IMR-90 (cell line): ENCODE measurements at regions of chr1 and their contacts with region 1.

Region 1: DNA sequence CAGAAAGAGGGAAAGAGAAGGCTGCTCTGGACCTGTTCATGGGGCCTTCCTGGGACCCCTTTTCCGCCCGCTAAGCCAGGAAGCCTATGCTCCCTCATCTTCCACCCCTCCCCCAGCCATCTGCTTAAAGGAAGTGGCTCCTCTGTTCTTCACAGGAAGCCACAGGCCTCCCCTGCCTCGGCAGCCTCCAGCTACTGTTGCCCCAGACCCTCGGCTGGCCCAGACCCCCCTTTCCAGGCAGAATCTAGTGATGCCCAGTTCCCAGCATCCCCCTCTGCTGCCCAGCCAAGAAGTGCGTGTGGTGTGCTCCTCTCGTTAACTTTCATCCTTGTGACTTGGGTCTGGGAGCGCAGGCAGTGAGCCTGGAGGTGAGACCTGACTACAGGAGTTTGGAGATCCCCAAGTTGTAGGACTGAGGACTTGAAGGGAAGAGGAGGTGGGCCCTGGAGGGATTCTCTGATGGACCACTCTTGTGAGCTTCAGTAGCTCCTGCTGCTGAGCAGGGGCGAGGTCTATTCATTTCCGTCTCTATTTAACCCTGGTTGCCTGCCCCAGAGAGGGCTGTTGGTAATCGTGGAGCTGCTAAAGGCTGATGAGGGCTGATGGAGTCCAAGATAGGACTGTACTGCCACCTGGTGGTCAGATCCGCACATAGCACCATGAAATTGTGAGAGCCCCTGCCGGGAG is 9.1 kb downstream of the IFI6 start:
- DNase-seq: peak; percentile 76
- ATAC-seq: peak; percentile 86
- H3K4me3 ChIP-seq: no peak overlapping the region
- H3K27ac ChIP-seq: 0 out of 2 replicates have a peak overlapping the region, but pooled peaks have one; percentile 2
- H3K4me1 ChIP-seq: peaks cover 14% of the 10 kb centered on the region
- H3K27me3 ChIP-seq: no peaks in the 10 kb centered on the region
- CTCF ChIP-seq: peak; percentile 92
- POLR2A ChIP-seq: 0 out of 2 replicates have a peak, but pooled peaks have one; percentile 32
- RAD21 ChIP-seq: peak; percentile 89

Region 2: DNA sequence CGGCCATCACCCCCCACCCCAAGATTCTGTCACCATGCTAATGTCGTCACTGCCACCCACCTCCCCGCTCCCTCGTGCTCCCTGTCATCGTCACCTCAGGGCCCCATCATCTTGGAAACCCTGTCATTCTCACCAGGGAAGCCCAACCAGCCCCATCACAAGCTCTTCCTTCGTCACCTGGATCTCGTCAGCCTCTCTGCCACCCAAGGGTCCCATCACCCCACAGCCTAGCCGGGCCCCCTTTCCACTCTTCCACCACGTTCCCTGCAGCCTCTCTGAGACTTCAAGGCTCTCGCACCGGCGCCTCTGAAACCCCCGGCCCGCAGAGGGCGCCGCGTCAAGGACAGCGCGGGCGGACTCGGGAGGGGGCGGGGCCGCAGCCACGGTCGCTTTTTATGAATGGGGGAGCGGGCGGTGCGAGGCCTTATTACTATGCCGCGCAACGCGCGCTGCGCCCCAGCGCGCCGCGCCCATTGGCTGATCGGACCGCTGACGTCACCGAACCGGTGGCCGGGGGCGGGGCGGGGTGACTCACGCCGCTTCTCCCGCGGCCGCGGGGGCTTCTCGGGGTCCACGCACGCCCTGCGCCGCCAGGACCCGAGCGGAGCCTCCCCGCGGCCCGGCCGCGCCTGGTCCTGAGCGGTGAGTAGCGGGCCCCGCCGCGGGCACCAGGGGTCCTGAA is 270.6 kb before region 1 on chr1 and contains the start of gene GPR3:
- CTCF ChIA-PET with region 1: interaction called, 3 read pairs
- POLR2A ChIA-PET with region 1: no interaction called
- dilution Hi-C with region 1: no loop called
- in situ Hi-C with region 1: no loop called
- intact Hi-C with region 1: loop called (anchors 5 kb)
- DNase-seq: peak; percentile 91
- ATAC-seq: peak; percentile 92
- H3K4me3 ChIP-seq: peak within 1 kb of the TSS; percentile 63
- H3K27ac ChIP-seq: peak within 1 kb of the TSS; percentile 52; the same call in 1 of the 2 replicates
- H3K4me1 ChIP-seq: peaks cover 15% of the 10 kb centered on the region
- H3K27me3 ChIP-seq: no peaks in the 10 kb centered on the region
- CTCF ChIP-seq: peak; percentile 69
- POLR2A ChIP-seq: peak; percentile 84
- RAD21 ChIP-seq: peak; percentile 40
- total RNA-seq, gene GPR3: 0.72 and 0.83 TPM in 2 replicates

Region 3: DNA sequence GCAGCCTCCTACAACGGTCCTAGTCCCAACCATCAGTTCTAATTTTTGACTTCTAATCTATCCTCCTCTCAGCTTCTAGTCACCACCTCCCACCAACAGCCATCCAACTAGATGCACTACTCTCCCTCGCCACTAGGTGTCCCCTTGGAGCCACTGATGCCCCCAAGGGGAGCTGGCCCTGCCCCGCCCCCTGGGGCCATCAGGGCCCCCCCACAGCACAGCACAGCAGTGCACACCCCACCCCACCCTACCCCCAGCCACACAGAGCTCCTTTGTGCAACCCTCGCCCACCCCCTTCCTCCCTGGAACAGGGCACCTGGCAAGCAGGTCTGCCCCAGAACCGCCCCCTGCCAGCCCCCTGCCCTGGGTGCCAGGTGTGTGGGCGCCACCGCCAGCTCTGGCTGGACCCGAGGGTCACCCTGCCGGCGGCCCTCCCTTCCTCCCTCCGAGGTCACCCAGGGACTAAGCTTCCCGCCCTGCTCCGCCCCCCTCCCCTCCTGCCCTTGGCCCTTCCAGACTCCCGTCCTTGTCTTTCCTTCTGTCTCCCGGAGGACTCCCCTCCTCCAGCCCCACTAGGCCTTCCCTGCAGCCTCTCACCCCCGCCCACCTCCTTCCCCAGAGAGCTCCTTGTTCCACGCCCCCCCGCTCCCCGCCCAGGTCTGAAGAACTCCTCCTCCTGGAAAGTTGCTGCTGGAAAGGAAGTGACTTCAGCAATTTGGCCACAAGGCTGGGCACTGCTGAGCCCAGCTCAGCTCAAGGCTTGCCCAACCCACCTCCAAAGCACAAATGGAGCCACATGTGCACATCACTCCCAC is 105.9 kb before region 1 on chr1:
- CTCF ChIA-PET with region 1: no interaction called
- POLR2A ChIA-PET with region 1: no interaction called
- dilution Hi-C with region 1: no loop called
- in situ Hi-C with region 1: no loop called
- intact Hi-C with region 1: loop called (anchors 5 kb)
- DNase-seq: peak; percentile 92
- ATAC-seq: peak; percentile 89
- H3K4me3 ChIP-seq: no peak overlapping the region
- H3K27ac ChIP-seq: peak overlapping the region; percentile 30
- H3K4me1 ChIP-seq: peaks cover 34% of the 10 kb centered on the region
- H3K27me3 ChIP-seq: no peaks in the 10 kb centered on the region
- CTCF ChIP-seq: peak; percentile 88
- POLR2A ChIP-seq: no peak
- RAD21 ChIP-seq: peak; percentile 88

Region 4: GRCh38 chr1:27609210-27609555 is 53.7 kb before region 1 on chr1:
- CTCF ChIA-PET with region 1: interaction called, 10 read pairs
- POLR2A ChIA-PET with region 1: no interaction called
- dilution Hi-C with region 1: no loop called
- in situ Hi-C with region 1: loop called (anchors 5 kb)
- intact Hi-C with region 1: loop called (anchors 1 kb)
- DNase-seq: no peak
- ATAC-seq: no peak
- H3K4me3 ChIP-seq: no peak overlapping the region
- H3K27ac ChIP-seq: no peak overlapping the region
- H3K4me1 ChIP-seq: no peaks in the 10 kb centered on the region; the same call in 1 of the 2 replicates
- H3K27me3 ChIP-seq: peaks cover 32% of the 10 kb centered on the region
- CTCF ChIP-seq: no peak
- POLR2A ChIP-seq: no peak
- RAD21 ChIP-seq: no peak

Region 5: GRCh38 chr1:27643701-27644625 is 18.9 kb before region 1 on chr1:
- CTCF ChIA-PET with region 1: interaction called, 11 read pairs
- POLR2A ChIA-PET with region 1: no interaction called
- dilution Hi-C with region 1: no loop called
- in situ Hi-C with region 1: no loop called
- intact Hi-C with region 1: loop called (anchors 1 kb)
- DNase-seq: peak; percentile 54
- ATAC-seq: peak; percentile 96
- H3K4me3 ChIP-seq: no peak overlapping the region
- H3K27ac ChIP-seq: no peak overlapping the region
- H3K4me1 ChIP-seq: no peaks in the 10 kb centered on the region
- H3K27me3 ChIP-seq: peaks cover 8% of the 10 kb centered on the region; the same call in 1 of the 2 replicates
- CTCF ChIP-seq: peak; percentile 65
- POLR2A ChIP-seq: no peak
- RAD21 ChIP-seq: peak; percentile 60